ENCODE measurements at regions of chr20 and their contacts with region 1.

Region 1: GRCh38 chr20:25372584-25373336 is 17.9 kb downstream of the ABHD12 start:
- DNase-seq: no peak
- ATAC-seq: no peak
- H3K4me3 ChIP-seq: no peak overlapping the region
- H3K27ac ChIP-seq: no peak overlapping the region
- H3K4me1 ChIP-seq: peaks cover 0 to 16% (median 7%) of the 10 kb centered on the region in 9 donors
- H3K27me3 ChIP-seq: no peaks in the 10 kb centered on the region
- CTCF ChIP-seq: no peak

Region 2: DNA sequence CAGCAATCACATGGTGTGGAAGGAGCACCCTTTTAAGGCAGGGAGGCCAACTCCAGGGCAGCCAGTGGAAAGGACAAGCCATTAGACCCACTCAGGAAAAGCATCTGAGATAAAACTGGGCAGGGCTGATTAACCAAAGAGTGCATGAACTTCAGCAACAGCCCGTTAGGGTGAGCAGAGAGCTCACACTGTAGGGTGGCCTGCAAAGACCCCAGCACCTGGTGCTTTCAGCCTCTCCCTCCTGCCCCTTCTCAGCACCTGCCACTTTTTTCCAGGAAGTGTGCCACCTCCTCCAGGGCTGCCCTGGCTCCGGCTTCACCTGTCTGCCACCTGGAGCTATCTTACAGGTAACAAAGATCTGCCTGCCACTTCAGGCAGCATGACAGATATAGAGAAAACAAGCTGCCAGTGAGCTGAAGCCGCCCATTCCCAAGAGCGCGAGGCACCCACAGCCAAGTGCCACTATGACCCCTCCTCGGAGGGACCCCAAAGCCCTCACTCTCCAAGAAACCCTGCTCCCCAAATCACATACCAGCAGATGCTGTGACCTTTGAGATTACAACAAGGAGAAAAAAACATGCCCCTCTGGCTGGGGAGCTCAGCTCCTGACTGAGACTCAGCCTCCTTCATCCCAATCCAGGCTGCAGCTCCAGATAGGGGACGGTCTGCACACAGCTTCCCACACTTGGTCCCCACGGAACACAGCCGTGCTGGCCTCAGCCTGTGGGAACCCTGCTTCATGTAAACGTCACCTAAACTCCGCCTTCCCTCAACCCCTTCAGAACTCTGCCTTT is 53.3 kb before region 1 on chr20:
- intact Hi-C with region 1: loop called in 1 of 10 experiments (anchors 10 kb)
- DNase-seq: peak in 1 of 2 donors; percentile 3
- ATAC-seq: peak in 7 of 8 donors; percentile 8 to 75 (median 53)
- H3K4me3 ChIP-seq: no peak overlapping the region
- H3K27ac ChIP-seq: peak overlapping the region in 4 of 10 donors; percentile 19 to 60 (median 37)
- H3K4me1 ChIP-seq: peaks cover 3 to 44% (median 17%) of the 10 kb centered on the region in 9 donors
- H3K27me3 ChIP-seq: no peaks in the 10 kb centered on the region
- CTCF ChIP-seq: peak in 1 of 9 donors; percentile 8